Heart right ventricle (tissue), 16 donors: ENCODE measurements at regions of chr18 and their contacts with region 1.

Region 1: DNA sequence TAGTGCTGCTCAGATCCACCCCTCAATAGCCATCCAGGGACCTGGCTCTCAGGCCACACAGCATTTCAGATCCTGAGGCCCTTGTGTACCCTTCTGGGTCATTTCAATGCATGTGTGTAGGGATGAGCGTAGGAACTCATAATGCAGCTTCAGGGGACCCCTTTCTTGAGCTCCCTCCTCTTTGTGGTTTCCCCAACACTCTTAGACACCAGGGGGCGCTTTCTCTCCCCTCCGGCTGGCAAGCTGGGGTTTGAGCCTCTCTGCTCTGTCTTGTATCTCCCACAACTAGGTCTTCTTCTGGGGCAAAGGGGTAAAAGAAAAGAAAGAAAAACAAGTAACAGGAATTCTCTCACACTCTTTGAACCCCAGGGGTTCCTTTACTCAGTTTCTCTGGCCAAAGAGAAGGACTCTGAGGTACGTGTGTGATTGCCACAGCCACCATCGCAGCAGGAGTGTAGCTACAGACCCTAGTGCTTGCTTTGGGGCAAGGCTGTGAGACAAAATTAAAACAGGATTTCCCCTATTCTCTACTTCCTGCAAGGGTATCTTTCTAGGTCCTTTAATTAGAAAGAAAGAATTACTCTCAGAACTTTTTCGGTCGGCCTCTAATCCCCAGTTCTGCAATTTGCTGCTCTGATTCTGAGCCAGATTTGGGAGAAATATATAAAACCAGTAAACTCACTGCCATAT is 38.0 kb downstream of the CABYR start:
- DNase-seq: peak; percentile 29 to 67
- ATAC-seq: peak; percentile 58 to 85 (median 81)
- H3K4me3 ChIP-seq: no peak overlapping the region
- H3K27ac ChIP-seq: no peak overlapping the region
- H3K4me1 ChIP-seq: peaks cover 0 to 14% (median 5%) of the 10 kb centered on the region in 9 donors
- H3K27me3 ChIP-seq: no peaks in the 10 kb centered on the region
- CTCF ChIP-seq: peak; percentile 64 to 86 (median 80)

Region 2: GRCh38 chr18:24160086-24160485 is 16.8 kb before region 1 on chr18:
- intact Hi-C with region 1: no loop called
- DNase-seq: no peak
- ATAC-seq: no peak
- H3K4me3 ChIP-seq: no peak overlapping the region
- H3K27ac ChIP-seq: no peak overlapping the region
- H3K4me1 ChIP-seq: no peaks in the 10 kb centered on the region
- H3K27me3 ChIP-seq: no peaks in the 10 kb centered on the region
- CTCF ChIP-seq: no peak

Region 3: DNA sequence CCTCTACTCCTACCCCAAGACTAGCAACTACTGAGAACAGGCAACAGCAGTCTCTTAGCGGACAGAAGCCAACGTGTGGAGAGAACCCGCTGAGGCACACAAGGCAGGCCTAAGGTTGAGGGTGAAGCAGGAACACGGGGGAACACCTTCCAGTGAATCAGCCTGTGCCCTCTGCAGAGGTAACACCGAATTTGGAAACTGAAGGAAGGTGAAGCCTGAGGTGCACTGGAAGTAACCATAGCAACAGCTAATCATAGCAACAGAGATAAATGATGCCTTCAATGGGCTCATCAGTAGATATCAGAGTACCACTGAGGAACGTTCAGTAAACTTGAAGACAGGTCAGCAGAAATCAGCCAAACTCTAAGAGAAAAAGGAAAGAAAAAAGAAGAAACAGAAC is 177.4 kb after region 1 on chr18:
- intact Hi-C with region 1: loop called in 1 of 10 experiments (anchors 10 kb)
- DNase-seq: no peak
- ATAC-seq: no peak
- H3K4me3 ChIP-seq: no peak overlapping the region
- H3K27ac ChIP-seq: no peak overlapping the region
- H3K4me1 ChIP-seq: no peaks in the 10 kb centered on the region
- H3K27me3 ChIP-seq: no peaks in the 10 kb centered on the region
- CTCF ChIP-seq: no peak

Region 4: DNA sequence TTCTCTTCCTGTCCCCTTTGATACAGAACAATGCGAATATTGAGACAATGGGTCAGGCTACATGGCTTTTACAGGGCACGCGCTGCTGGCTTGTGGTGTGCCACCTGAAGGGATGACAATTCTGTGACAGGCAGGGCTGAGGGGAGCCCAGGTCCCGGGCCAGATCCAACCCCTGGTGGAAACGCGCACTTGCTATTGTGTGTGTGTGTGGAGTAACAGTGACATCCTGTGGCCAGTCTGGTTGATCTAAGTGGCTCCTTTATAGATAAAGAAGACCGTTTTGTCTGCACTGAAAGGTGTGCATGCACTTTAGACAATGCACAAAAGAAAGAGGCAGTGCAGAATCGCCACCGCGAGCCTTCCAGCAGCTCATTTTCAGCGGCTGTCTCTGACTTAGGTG is 557.2 kb after region 1 on chr18:
- intact Hi-C with region 1: no loop called
- DNase-seq: peak in 1 of 2 donors; percentile 8
- ATAC-seq: peak in 6 of 8 donors; percentile 17 to 50 (median 46)
- H3K4me3 ChIP-seq: no peak overlapping the region
- H3K27ac ChIP-seq: no peak overlapping the region
- H3K4me1 ChIP-seq: peaks cover 0 to 5% (median 0%) of the 10 kb centered on the region in 9 donors
- H3K27me3 ChIP-seq: peaks cover 0 to 13% (median 0%) of the 10 kb centered on the region in 7 donors
- CTCF ChIP-seq: peak in 7 of 9 donors; percentile 21 to 49 (median 35)